RWPE1 (cell line): ENCODE measurements at regions of chr1 and their contacts with region 1.

Region 1: GRCh38 chr1:54944610-54945544 is 35.6 kb upstream of the TMEM61 start:
- DNase-seq: peak; percentile 70
- H3K27ac ChIP-seq: peak overlapping the region; percentile 47
- CTCF ChIP-seq: peak; percentile 83

Region 2: DNA sequence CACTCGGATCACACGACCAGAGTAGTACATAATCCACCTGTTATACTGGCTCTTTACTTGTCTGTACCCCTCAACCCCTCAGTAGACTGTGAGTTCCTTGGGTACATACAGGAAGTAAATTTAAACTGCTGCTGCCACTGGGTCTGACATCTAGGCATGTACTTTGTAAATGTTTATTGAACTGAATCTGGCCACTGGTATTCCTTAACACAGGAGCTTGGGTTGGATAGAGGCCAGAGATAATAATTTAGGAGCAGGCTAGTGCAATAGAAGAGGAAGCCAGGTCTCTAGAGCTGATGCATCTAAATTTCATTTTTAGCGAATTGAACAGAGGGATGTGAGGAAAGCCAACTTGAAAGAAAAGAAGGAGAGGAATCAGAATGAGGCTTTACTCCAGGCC is 216.8 kb before region 1 on chr1:
- CTCF ChIA-PET with region 1: no interaction called
- POLR2A ChIA-PET with region 1: no interaction called
- DNase-seq: no peak
- H3K27ac ChIP-seq: no peak overlapping the region
- CTCF ChIP-seq: no peak

Region 3: GRCh38 chr1:54886724-54887664 is 57.9 kb before region 1 on chr1 and contains the start of gene DHCR24:
- CTCF ChIA-PET with region 1: interaction called, 12 read pairs
- POLR2A ChIA-PET with region 1: no interaction called
- DNase-seq: peak; percentile 99
- H3K27ac ChIP-seq: peak within 1 kb of the TSS; percentile 93
- CTCF ChIP-seq: no peak

Region 4: DNA sequence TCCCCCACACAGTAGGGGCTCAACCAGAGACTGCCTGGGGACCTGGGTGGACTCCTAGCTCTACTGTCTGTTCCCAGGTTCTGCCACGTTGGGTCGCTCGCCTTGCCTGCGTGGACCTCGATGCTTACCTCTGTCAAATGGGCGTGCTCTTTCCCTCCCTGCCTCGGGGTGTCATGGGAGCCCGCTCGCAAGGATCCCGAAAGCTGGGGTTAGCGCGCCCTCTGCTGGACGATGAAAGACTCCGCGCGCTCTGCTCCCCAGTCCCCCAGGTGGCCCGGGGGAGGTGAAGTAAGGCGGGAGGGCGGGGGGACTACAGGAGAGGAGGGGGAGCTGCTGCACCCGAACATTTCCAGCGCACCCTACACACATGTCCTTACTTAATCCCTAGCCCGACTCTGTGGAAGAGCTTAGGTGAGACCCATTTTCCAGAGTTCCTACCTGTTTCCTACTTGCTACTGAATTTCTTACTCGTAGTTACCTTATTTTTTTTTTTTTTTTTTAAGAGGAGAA is 51.5 kb after region 1 on chr1:
- CTCF ChIA-PET with region 1: interaction called, 60 read pairs
- POLR2A ChIA-PET with region 1: no interaction called
- DNase-seq: peak; percentile 90
- H3K27ac ChIP-seq: no peak overlapping the region
- CTCF ChIP-seq: peak; percentile 85

Region 5: DNA sequence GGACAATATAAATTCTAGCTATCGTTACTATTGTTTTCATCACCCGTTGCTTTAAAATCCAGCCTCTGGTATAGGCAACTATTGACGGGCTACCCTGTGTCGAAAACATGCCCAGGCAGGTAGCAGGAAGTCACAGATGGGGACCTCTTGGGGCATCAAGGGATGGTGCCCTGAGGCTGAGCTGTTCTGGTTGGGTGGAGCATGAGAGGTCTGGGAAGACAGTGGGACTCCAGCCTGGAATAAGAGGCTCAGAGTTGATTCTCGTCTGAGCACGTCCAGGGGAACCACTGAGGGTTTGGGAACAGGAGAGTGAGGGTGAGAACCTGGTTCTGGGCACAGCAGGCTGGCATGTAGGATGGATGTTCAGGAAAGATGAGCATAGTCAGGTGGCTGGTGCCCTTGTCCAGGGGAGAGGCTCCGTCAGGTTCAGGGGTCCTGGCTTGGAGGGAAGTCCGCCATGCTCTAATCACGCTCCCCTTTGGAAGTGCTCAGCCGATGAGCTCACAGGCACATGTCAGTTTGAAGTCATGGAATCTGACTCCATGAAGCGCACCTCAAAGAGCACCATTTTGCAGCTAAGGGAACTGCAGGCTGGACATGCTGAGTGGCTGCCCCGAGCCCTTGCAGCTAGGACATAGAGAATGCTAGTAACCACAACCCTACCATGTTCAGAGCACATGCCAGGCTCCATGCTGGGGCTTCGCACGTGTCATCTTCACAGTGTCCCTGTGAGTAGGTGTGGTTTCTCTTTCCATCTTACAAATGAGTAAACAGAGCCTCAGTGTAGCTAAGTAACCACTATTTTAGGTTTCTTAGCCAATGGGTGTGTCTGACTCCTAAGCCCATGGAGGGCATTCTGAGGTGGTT is 115.5 kb after region 1 on chr1:
- CTCF ChIA-PET with region 1: no interaction called
- POLR2A ChIA-PET with region 1: no interaction called
- DNase-seq: no peak
- H3K27ac ChIP-seq: peak overlapping the region; percentile 60
- CTCF ChIP-seq: no peak

Region 6: DNA sequence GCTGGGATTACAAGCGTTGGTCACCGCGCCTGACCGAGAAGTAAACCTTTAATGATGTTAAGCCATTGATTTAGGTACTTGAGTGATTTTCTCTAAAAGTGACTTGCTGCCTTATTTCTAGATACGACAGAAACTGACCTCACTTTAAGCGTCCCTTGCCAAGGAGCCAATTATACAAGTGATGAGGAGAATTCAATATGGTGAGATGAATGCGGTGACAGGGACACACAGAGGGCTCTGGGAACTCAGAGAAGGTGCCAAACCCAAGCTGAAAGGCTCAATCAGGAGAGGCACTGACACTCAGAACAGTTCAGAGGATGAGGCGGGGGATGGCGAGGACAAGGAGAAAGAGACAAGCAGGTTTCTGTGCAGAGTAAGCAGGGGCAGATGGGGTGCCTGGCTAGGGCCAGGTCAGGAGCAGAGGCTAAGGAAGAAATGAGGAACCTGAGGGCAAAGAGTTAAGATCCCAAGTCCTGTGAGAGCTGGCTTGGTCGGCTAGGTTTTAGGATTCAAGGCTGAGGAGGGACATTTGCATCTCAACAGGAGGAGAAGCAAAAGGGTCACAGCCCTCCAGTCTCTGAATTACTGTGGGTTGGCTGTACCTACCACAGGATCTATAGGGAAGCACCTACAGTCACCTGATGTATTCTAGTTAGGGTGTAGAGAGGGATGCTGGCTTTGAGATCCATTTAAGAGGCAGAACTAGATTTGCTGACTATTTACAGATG is 353.5 kb after region 1 on chr1:
- CTCF ChIA-PET with region 1: no interaction called
- POLR2A ChIA-PET with region 1: no interaction called
- DNase-seq: no peak
- H3K27ac ChIP-seq: no peak overlapping the region
- CTCF ChIP-seq: no peak